Activated T-helper 1 cell treated with anti-CD3 and anti-CD28 coated beads, Interleukin-12 subunit alpha, Interleukin-12 subunit beta, Interleukin-2, Interleukin-4 antibody, amounts not matched to agents 30 ng/mL and 10 ng/mL and 1 ng/mL, durations not matched to agents 14 hours and 24 hours and 36 hours (primary cell): ENCODE measurements at regions of chr1 and their contacts with region 1.

Region 1: GRCh38 chr1:15869413-15869812 is 21.9 kb downstream of the SPEN start:
- DNase-seq: no peak
- H3K4me3 Mint-ChIP-seq: no peak overlapping the region
- H3K27ac Mint-ChIP-seq: no peak overlapping the region
- H3K4me1 Mint-ChIP-seq: peaks cover 21% of the 10 kb centered on the region
- H3K27me3 Mint-ChIP-seq: no peaks in the 10 kb centered on the region

Region 2: DNA sequence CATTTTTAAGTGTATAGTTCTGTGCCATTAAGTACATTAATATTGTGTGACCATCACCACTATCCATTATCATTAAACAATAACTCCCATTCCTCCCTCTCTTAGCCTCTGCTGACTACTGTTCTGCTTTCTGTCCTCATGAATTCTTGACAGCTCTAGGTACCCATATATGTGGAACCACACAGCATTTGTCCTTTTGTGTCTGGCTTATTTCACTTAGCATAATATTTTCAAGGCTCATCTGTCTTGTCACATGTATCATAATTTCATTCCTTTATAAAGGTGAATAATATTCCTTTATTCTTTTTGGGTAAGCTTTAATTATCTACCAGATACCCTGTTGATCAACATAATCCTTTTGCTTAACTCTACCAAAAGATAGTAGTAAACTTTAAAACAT is 25.8 kb after region 1 on chr1:
- intact Hi-C with region 1: loop called (anchors 2 kb)
- DNase-seq: no peak
- H3K4me3 Mint-ChIP-seq: peak overlapping the region; percentile 42
- H3K27ac Mint-ChIP-seq: no peak overlapping the region
- H3K4me1 Mint-ChIP-seq: peaks cover 40% of the 10 kb centered on the region
- H3K27me3 Mint-ChIP-seq: no peaks in the 10 kb centered on the region